Activated B cell treated with CpG ODN at 0.5 μM for 24 hours (primary cell): ENCODE measurements at regions of chr18 and their contacts with region 1.

Region 1: DNA sequence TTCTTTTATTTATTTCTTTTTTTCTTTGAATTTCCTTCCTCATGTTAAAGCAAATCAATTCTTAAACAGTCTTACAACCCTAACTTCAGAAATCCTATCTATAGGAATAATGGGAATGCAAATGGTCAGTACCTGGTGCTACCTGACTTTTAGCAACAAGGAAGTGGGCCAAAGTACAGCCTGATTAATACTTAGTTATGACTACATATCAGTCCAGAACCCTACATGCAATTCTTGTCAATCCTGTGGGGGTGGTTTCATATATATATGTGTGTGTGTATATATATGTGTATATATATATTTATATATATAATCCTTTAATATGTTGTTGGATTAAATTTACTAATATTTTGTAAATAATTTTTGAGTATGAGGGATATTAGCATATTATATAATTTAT is 14.8 kb upstream of the TRAPPC8 start:
- DNase-seq: no peak
- ATAC-seq: no peak
- H3K4me3 Mint-ChIP-seq: no peak overlapping the region
- H3K27ac Mint-ChIP-seq: no peak overlapping the region
- H3K4me1 Mint-ChIP-seq: no peaks in the 10 kb centered on the region
- H3K27me3 Mint-ChIP-seq: peaks cover 2% of the 10 kb centered on the region
- CTCF ChIP-seq: no peak

Region 2: GRCh38 chr18:31555971-31556747 is 401.6 kb before region 1 on chr18:
- CTCF ChIA-PET with region 1: no interaction called
- POLR2A ChIA-PET with region 1: no interaction called
- intact Hi-C with region 1: loop called (anchors 1 kb)
- DNase-seq: no peak
- ATAC-seq: peak; percentile 40
- H3K4me3 Mint-ChIP-seq: no peak overlapping the region
- H3K27ac Mint-ChIP-seq: no peak overlapping the region
- H3K4me1 Mint-ChIP-seq: no peaks in the 10 kb centered on the region
- H3K27me3 Mint-ChIP-seq: peaks cover 4% of the 10 kb centered on the region
- CTCF ChIP-seq: peak; percentile 31

Region 3: DNA sequence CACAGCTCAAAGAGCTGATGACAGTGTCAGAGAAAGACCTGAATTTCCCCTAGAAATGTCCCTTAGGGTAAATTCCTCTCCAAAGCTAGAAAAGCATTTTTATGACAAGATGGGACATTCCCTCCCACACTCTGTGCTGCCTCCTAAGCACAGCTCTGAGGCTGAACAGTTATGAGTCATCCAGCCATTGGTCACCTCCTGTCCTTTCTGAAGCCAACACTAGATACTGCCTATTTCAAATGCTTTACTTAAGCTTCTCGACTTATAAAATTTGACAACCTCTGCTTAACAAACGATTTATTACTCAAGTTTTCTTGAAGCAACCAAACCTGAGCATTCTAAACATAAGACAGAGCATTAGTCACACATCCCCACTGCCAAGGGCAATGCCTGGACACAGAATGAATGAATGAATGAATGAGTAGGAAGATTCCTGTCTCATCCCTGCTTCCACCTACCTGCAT is 308.7 kb before region 1 on chr18:
- CTCF ChIA-PET with region 1: no interaction called
- POLR2A ChIA-PET with region 1: no interaction called
- intact Hi-C with region 1: no loop called
- DNase-seq: no peak
- ATAC-seq: peak; percentile 85
- H3K4me3 Mint-ChIP-seq: no peak overlapping the region
- H3K27ac Mint-ChIP-seq: no peak overlapping the region
- H3K4me1 Mint-ChIP-seq: peaks cover 35% of the 10 kb centered on the region
- H3K27me3 Mint-ChIP-seq: peaks cover 5% of the 10 kb centered on the region
- CTCF ChIP-seq: no peak

Region 4: GRCh38 chr18:31741097-31741735 is 216.5 kb before region 1 on chr18:
- CTCF ChIA-PET with region 1: no interaction called
- POLR2A ChIA-PET with region 1: no interaction called
- intact Hi-C with region 1: loop called (anchors 1 kb)
- DNase-seq: no peak
- ATAC-seq: peak; percentile 31
- H3K4me3 Mint-ChIP-seq: no peak overlapping the region
- H3K27ac Mint-ChIP-seq: no peak overlapping the region
- H3K4me1 Mint-ChIP-seq: peaks cover 2% of the 10 kb centered on the region
- H3K27me3 Mint-ChIP-seq: no peaks in the 10 kb centered on the region
- CTCF ChIP-seq: peak; percentile 94

Region 5: DNA sequence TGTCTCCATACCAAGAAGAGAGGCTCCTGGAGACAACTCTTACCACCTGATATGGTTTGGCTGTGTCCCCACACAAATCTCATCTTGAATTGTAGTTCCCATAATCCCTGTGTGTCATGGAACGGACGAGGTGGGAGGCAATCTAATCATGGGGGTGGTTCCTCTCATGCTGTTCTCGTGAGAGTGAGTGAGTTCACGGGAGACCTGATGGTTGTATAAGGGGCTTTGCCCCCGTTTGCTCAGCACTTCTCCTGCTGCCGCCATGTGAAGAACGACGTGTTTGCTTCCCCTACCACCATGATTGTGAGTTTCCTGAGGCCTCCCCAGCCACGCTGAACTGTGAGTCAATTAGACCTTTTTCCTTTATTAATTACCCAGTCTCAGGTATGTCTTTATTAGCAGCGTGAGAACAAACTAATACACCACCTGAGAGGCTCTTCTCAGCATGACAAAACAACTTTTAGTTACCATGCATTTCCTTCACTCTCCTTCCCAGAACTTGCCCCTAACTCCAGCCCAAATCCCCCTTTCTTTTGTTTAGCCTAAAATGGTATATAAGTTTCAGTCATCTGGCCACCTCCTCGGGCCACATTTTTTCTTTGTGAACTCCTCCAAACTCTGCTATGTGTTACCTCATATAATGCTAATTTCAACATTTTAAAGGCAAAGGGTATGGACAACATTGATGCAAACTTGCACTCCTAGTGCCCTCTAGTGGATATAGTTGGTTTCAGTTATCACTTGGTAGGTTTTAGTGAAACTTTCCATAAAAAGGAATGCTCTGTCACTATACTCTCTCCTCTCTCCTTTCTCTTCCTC is 138.4 kb before region 1 on chr18:
- CTCF ChIA-PET with region 1: no interaction called
- POLR2A ChIA-PET with region 1: no interaction called
- intact Hi-C with region 1: loop called (anchors 5 kb)
- DNase-seq: no peak
- ATAC-seq: no peak
- H3K4me3 Mint-ChIP-seq: no peak overlapping the region
- H3K27ac Mint-ChIP-seq: no peak overlapping the region
- H3K4me1 Mint-ChIP-seq: no peaks in the 10 kb centered on the region
- H3K27me3 Mint-ChIP-seq: no peaks in the 10 kb centered on the region
- CTCF ChIP-seq: no peak

Region 6: DNA sequence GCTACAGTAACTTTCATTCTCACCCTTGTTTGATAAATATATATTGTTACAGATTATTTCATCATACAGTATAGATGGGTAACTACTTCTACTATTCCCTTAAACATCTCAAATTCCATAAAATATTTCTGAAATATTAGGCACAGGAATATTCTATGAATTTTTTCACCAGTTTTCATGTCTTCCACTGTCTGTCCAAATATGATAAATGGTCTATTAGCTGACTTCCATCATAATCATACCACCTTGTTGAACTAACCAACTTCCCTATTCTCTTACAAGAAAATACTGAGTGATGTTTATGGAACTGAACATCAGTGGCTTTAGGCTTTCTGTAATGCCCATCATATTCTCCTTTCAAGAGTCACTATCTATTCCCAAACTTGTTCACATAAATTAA is 97.2 kb before region 1 on chr18:
- CTCF ChIA-PET with region 1: no interaction called
- POLR2A ChIA-PET with region 1: no interaction called
- intact Hi-C with region 1: loop called (anchors 5 kb)
- DNase-seq: no peak
- ATAC-seq: no peak
- H3K4me3 Mint-ChIP-seq: no peak overlapping the region
- H3K27ac Mint-ChIP-seq: no peak overlapping the region
- H3K4me1 Mint-ChIP-seq: no peaks in the 10 kb centered on the region
- H3K27me3 Mint-ChIP-seq: no peaks in the 10 kb centered on the region
- CTCF ChIP-seq: no peak

Region 7: DNA sequence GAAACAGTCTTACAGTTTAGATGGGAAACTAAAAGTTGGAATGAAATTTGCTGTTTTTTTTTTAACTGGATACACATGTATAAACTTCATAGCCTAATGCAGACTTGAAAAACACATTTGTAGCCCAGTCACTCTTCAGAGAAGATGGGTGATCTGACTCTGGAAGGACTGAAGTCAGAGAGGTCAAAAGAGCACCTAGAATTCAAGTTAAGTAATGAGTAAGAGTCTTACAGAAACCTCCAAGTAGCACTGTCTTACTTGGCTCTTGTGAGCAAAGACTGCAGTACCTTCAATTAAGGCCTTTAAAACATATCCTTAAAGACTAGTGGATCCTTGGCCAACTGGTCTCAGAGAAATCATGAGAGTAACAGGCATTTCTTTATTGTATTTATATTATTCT is 56.7 kb before region 1 on chr18:
- CTCF ChIA-PET with region 1: no interaction called
- POLR2A ChIA-PET with region 1: no interaction called
- intact Hi-C with region 1: loop called (anchors 5 kb)
- DNase-seq: no peak
- ATAC-seq: no peak
- H3K4me3 Mint-ChIP-seq: no peak overlapping the region
- H3K27ac Mint-ChIP-seq: no peak overlapping the region
- H3K4me1 Mint-ChIP-seq: no peaks in the 10 kb centered on the region
- H3K27me3 Mint-ChIP-seq: no peaks in the 10 kb centered on the region
- CTCF ChIP-seq: no peak

Region 8: GRCh38 chr18:32208023-32208422 is 250.3 kb after region 1 on chr18:
- CTCF ChIA-PET with region 1: no interaction called
- POLR2A ChIA-PET with region 1: no interaction called
- intact Hi-C with region 1: no loop called
- DNase-seq: no peak
- ATAC-seq: no peak
- H3K4me3 Mint-ChIP-seq: no peak overlapping the region
- H3K27ac Mint-ChIP-seq: no peak overlapping the region
- H3K4me1 Mint-ChIP-seq: no peaks in the 10 kb centered on the region
- H3K27me3 Mint-ChIP-seq: no peaks in the 10 kb centered on the region
- CTCF ChIP-seq: no peak